Astrocyte of the cerebellum (primary cell): ENCODE measurements at regions of chr13 and their contacts with region 1.

Region 1: DNA sequence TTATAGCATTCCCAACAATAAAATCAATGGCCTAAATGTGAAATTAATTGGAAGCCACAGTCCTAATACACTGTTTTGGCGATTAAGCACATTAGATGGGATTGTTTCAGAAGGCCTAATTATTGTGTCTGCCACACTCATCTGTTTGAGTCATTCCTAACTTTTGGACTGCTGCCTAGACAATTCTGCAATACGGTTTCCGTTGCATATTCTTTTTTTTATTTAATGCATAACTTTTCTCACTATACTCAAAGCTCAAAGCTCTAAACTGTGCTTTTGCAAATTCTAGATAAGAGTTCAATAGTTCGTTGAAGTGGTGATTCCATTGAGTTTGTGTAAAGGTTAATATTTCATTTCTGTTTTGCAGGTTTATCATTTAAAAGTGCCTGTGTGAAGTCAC is 53.1 kb downstream of the MBNL2 start:
- DNase-seq: peak; percentile 81
- H3K4me3 ChIP-seq: no peak overlapping the region
- CTCF ChIP-seq: no peak

Region 2: DNA sequence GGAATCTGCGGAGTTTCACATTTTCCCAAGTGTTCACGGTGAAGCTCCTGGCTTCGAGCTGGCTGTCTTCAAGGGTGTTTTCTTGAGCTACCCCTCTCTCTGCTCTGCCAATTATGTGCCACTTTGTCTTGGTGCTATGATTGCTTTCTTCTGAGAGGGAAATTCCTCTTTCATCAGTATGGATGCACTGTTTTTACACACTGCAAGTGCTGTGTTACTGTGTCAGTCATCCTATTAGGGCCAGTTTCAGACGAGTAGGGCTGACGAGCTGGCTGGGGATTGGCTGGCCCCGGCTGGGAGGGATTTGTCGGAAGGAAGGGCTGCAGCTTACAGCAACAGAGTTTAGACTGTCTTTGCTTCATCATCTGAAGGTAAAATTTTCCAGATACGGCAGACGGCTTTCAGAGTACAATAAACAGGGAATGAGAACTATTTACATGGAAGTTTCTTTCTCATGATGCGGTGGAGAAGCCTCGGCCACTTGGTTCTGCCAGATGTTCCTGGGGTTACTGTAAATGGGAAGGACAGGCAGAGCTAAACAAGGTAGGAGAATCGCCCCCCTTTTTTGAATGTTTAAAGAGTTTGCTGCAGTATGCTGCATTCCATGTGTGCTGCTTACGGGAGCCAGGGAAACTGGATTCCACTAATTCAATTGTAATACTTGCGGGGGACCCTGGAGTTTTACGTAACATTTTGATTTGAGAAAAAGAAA is 53.1 kb before region 1 on chr13 and contains the start of gene MBNL2:
- in situ Hi-C with region 1: no loop called
- DNase-seq: peak; percentile 89
- H3K4me3 ChIP-seq: peak within 1 kb of the TSS; percentile 82
- CTCF ChIP-seq: no peak

Region 3: DNA sequence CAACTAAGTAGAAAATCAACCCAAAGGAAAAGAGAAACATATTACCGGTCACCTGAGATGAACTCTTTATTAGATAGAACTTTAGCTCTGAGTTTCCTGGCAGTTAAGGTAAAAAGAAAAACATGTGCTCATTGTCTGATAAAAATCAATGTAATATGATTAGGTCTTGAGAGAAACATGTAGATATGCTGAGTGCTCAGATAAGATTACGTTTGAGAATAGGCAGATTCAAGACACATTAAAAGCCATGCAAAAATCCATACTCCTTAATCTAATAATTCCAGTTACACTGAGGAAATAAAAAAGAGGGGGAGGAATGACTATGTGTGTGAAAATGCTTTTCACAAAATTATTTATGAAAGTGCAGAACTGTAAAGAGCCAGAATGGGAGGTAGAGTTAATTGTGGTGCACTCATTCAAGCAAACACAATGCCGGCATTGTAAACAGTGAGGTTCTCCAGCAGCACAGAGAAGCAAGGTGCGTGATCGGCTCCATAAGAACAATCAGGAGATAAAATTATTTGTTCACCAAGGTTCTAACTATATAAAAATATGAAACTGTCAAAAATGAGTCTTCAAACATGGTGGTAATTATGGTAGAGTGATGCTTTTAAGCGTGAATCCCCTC is 35.7 kb after region 1 on chr13:
- in situ Hi-C with region 1: loop called (anchors 5 kb)
- DNase-seq: no peak
- H3K4me3 ChIP-seq: no peak overlapping the region
- CTCF ChIP-seq: no peak